ENCODE measurements at regions of chr17 and their contacts with region 1.

Region 1: GRCh38 chr17:1752425-1753262 is 9.2 kb upstream of the SERPINF1 start:
- DNase-seq: peak; percentile 68 to 83
- ATAC-seq: peak; percentile 88 to 92
- H3K4me3 ChIP-seq: peak overlapping the region; percentile 33
- H3K27ac ChIP-seq: peak overlapping the region; percentile 76 to 88
- H3K4me1 ChIP-seq: peaks cover 13% of the 10 kb centered on the region
- CTCF ChIP-seq: no peak
- EP300 ChIP-seq: no peak
- POLR2A ChIP-seq: peak; percentile 26; the same call in 1 of the 2 replicates
- RAD21 ChIP-seq: no peak

Region 2: DNA sequence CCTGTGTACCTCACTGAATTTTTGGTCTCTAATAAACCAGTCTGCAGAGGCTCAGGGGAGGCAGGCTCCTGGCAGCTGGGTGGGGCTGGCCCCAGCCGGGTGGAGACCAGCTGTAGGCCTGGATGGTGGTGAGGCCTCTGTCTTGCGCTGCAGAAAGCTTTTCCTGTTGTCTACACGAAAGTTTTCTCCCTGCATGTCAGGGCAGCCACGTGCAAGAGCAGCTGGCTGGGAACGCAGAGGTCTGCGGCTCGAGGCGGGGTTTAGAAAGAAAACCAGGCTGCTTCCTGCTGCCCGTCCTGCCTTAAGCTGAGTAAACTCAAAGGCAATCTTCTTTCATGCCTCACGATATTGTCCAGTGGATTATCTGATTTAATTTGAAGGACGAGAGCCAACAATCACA is 11.6 kb after region 1 on chr17:
- CTCF ChIA-PET with region 1: interaction called, 12 read pairs
- POLR2A ChIA-PET with region 1: interaction called, 9 read pairs
- DNase-seq: no peak
- ATAC-seq: peak in 1 of 2 experiments; percentile 11; a peak in 2 of 6 replicates
- H3K4me3 ChIP-seq: no peak overlapping the region
- H3K27ac ChIP-seq: 0 out of 6 replicates have a peak overlapping the region, but pooled peaks of 1 of the 2 experiments have one; percentile 17
- H3K4me1 ChIP-seq: peaks cover 20% of the 10 kb centered on the region
- CTCF ChIP-seq: no peak
- EP300 ChIP-seq: no peak
- POLR2A ChIP-seq: no peak
- RAD21 ChIP-seq: no peak